Sigmoid colon (tissue), 7 donors: ENCODE measurements at regions of chr11 and their contacts with region 1.

Region 1: GRCh38 chr11:57476757-57477506 is 16.6 kb downstream of the RTN4RL2 start:
- DNase-seq: no peak
- H3K4me3 ChIP-seq: peak overlapping the region; percentile 15 to 57 (median 50)
- H3K27ac ChIP-seq: peak overlapping the region in 1 of 4 donors; percentile 49
- H3K4me1 ChIP-seq: peaks cover 0 to 16% (median 15%) of the 10 kb centered on the region in 4 donors
- H3K27me3 ChIP-seq: peaks cover 0 to 45% (median 28%) of the 10 kb centered on the region in 3 donors
- CTCF ChIP-seq: peak in 2 of 4 experiments; percentile 36 to 45
- EP300 ChIP-seq: no peak
- POLR2A ChIP-seq: no peak

Region 2: DNA sequence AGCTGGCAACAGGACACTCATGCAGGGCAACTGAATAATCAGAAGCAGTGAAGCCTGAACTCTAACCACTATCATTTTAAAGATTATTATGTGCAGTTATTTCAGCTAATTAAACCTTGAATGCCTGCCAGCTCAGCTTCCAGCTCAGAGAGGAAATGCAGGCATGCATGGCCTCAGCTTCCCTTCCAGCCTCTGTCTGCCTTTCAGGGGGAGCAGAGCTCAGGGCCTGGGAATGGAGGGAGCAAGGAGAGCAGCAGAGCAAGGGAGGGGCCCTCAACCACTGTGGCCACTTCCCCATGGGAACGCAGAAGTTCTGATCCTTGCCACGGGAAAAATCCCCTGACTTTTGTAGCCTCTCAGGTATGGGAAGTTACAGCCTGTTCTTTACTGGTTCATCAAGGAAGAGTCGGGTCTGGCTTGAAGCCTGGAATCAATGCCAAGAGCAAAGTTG is 207.3 kb before region 1 on chr11:
- intact Hi-C with region 1: no loop called
- DNase-seq: no peak
- H3K4me3 ChIP-seq: no peak overlapping the region
- H3K27ac ChIP-seq: no peak overlapping the region
- H3K4me1 ChIP-seq: no peaks in the 10 kb centered on the region
- H3K27me3 ChIP-seq: no peaks in the 10 kb centered on the region
- CTCF ChIP-seq: no peak
- EP300 ChIP-seq: no peak
- POLR2A ChIP-seq: no peak

Region 3: DNA sequence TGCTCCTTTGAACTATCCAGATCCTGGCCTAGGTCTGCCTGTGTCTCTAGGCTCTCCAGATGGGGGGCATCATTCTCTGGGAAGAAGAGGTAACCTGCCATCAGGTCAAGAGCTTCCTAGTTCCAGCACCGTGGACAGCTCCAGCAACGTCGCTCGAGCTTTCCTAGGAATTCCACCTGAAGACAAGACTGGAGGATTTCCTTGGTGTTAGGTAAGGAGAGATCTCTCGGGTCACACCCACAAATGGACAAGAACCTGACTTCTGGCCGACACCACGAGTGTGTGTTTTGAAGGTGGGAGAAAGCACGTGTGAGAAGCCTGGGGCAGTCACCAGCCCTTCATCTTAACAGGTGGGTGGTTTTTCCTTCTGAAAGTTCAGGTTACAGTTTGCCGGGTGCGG is 97.2 kb before region 1 on chr11:
- intact Hi-C with region 1: no loop called
- DNase-seq: no peak
- H3K4me3 ChIP-seq: no peak overlapping the region
- H3K27ac ChIP-seq: no peak overlapping the region
- H3K4me1 ChIP-seq: no peaks in the 10 kb centered on the region
- H3K27me3 ChIP-seq: peaks cover 0 to 4% (median 0%) of the 10 kb centered on the region in 3 donors
- CTCF ChIP-seq: no peak
- EP300 ChIP-seq: no peak
- POLR2A ChIP-seq: no peak

Region 4: DNA sequence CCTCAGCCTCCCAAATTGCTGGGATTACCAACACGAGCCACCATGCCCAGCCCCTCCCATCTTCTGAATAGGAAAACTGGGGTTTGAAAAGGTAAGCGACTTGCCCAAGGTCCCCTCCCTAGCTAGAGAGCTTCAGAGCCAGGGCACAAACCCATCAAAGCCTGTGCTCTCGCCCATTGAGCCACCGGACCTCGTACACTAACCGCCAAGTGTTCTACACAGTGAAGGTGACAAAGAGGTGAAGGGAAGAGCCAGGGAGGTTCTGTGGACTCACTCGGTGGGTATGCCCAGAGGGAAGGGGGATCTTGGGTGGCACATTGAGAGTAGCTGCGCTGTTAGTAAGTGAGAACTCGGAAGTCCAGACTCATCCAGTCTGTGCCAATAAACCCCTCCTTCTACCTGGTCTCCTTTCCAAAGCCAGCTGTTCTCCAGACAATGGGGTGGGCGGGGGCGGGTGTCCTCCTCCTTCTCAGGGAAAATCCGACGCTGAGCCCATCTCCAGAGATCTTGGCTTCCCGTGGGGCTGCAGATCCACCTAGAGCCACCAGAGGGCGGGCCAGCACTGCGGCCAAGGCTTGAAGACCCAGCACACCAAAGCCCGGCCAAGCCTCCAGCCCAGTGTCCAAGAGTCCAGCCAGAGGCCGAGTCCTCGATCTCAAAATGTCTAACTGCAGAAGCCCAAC is 19.8 kb before region 1 on chr11:
- intact Hi-C with region 1: loop called (anchors 2 kb)
- DNase-seq: peak; percentile 94
- H3K4me3 ChIP-seq: no peak overlapping the region
- H3K27ac ChIP-seq: no peak overlapping the region
- H3K4me1 ChIP-seq: peaks cover 0 to 45% (median 42%) of the 10 kb centered on the region in 4 donors
- H3K27me3 ChIP-seq: peaks cover 34 to 60% (median 38%) of the 10 kb centered on the region in 3 donors
- CTCF ChIP-seq: peak; percentile 87 to 99 (median 92)
- EP300 ChIP-seq: no peak
- POLR2A ChIP-seq: no peak

Region 5: DNA sequence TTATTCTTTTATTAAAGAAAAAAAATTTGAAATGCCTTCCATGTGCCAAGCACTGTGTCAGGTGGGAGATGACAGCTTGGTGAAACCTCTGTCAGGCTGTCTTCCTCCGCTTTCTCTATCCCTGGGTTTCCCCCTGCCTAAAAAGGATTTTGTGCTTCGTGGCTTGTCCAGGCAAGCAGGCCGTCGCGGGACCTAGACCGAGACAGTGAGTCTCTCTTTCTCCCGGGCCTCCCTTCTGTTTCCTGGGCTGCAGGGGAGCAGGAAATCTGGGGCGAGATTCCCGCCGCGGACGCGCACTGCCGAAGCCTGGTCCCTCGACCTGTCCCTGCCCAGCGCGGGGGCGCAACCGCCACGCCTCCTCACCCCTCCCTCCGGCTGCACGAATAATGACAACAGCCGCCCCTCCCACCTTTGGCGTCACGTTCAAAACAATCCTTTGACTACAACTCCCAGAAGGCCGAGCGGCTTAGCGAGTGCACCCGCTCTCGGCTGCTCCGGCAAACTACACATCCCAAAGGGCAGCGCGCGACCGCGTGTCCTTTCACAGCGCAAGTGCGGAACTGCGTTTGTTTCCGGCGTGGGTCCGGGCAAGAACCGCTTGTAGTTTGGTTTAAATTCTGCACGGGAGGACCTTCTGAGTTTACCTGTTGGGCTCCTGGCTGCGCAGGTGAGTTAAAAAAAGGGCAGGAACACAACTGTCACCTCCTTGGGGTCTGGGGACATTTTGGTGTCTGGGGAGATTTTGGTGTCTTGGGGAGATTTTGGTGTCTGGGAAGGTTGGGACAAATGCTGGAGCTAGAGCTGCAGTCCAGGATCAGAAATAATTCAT is 180.5 kb after region 1 on chr11 and contains the start of gene CLP1:
- intact Hi-C with region 1: no loop called
- DNase-seq: peak; percentile 99
- H3K4me3 ChIP-seq: peak within 1 kb of the TSS; percentile 55 to 68 (median 67)
- H3K27ac ChIP-seq: peak within 1 kb of the TSS; percentile 87 to 93 (median 88)
- H3K4me1 ChIP-seq: peaks cover 0 to 20% (median 17%) of the 10 kb centered on the region in 4 donors
- H3K27me3 ChIP-seq: peaks cover 0 to 16% (median 0%) of the 10 kb centered on the region in 3 donors
- CTCF ChIP-seq: no peak
- EP300 ChIP-seq: peak in 1 of 4 donors; percentile 73
- POLR2A ChIP-seq: peak; percentile 43 to 68
- total RNA-seq, gene CLP1: 3.9 to 23.2 (median 13.7) TPM